PC-3 (cell line): ENCODE measurements at regions of chrX and their contacts with region 1.

Region 1: DNA sequence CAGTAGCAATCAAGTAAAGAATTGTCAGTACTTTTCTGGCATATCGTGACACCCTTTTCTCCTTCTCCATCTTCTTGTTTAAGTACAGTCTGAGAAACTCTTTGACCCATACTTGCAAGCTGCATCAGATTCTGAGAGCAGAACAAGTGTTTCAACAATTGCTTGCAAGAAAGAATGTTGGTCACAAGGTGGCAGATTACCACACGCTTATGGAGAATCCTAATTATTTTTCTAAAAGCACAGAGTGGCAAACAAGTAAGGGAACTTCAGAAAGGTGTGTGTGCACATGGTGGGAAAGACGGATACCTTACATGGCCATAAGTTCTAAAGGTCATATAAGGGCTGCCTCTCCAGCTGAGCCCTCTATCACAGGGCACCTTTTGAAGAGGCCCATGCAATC is 136.4 kb upstream of the FGF13 start:
- DNase-seq: peak; percentile 48
- ATAC-seq: peak; percentile 46; the same call in 1 of the 2 replicates
- H3K4me3 ChIP-seq: no peak overlapping the region
- H3K27ac ChIP-seq: no peak overlapping the region
- H3K4me1 ChIP-seq: no peaks in the 10 kb centered on the region; the same call in 1 of the 2 replicates
- H3K27me3 ChIP-seq: no peaks in the 10 kb centered on the region
- CTCF ChIP-seq: peak; percentile 65

Region 2: DNA sequence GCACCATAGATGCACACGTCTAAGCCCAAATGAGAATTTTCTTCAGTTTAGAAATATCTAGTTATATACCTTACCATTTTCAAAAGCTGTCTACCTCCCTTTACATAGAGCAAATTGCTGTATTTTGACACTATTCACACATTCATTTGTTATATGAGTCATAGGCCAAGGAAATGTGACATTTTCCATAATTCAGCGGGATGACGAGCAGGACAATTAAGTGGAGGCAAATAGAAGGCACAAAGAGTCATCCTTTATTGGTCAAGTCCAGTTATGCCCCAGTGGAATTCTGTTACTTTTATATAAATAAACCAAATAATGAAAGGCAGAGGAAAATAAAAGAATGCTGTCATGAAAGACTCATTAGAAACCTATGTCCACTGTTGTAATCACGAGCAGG is 164.3 kb before region 1 on chrX:
- CTCF ChIA-PET with region 1: no interaction called
- POLR2A ChIA-PET with region 1: no interaction called
- intact Hi-C with region 1: no loop called
- DNase-seq: no peak
- ATAC-seq: no peak
- H3K4me3 ChIP-seq: no peak overlapping the region
- H3K27ac ChIP-seq: no peak overlapping the region
- H3K4me1 ChIP-seq: no peaks in the 10 kb centered on the region
- H3K27me3 ChIP-seq: no peaks in the 10 kb centered on the region
- CTCF ChIP-seq: no peak

Region 3: DNA sequence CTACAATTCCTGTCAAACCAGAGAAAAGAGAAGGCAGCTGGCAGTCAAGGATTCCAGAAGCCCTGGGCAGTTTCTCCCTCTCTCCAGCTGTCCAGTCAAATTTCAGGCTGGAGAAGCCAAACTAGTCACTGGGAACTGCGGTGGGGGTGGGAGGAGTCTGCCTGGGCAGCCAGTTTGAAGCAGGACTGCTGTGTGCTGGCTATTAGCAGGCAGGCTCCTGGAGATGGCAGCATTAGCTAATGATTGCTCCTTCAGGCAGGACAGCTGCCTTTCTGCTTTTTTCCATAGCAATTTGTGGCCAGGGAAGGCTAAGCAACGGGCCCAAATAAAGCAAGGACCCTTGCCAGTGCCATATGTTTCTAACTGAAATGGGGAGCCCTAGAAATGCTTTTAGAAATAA is 91.7 kb before region 1 on chrX:
- CTCF ChIA-PET with region 1: no interaction called
- POLR2A ChIA-PET with region 1: no interaction called
- intact Hi-C with region 1: loop called (anchors 5 kb)
- DNase-seq: peak; percentile 73
- ATAC-seq: peak; percentile 93
- H3K4me3 ChIP-seq: no peak overlapping the region
- H3K27ac ChIP-seq: no peak overlapping the region
- H3K4me1 ChIP-seq: no peaks in the 10 kb centered on the region
- H3K27me3 ChIP-seq: no peaks in the 10 kb centered on the region
- CTCF ChIP-seq: peak; percentile 63

Region 4: GRCh38 chrX:138986235-138986634 is 138.3 kb after region 1 on chrX:
- CTCF ChIA-PET with region 1: no interaction called
- POLR2A ChIA-PET with region 1: no interaction called
- intact Hi-C with region 1: loop called (anchors 5 kb)
- DNase-seq: no peak
- ATAC-seq: no peak
- H3K4me3 ChIP-seq: no peak overlapping the region
- H3K27ac ChIP-seq: no peak overlapping the region
- H3K4me1 ChIP-seq: peaks cover 17% of the 10 kb centered on the region
- H3K27me3 ChIP-seq: no peaks in the 10 kb centered on the region
- CTCF ChIP-seq: no peak

Region 5: DNA sequence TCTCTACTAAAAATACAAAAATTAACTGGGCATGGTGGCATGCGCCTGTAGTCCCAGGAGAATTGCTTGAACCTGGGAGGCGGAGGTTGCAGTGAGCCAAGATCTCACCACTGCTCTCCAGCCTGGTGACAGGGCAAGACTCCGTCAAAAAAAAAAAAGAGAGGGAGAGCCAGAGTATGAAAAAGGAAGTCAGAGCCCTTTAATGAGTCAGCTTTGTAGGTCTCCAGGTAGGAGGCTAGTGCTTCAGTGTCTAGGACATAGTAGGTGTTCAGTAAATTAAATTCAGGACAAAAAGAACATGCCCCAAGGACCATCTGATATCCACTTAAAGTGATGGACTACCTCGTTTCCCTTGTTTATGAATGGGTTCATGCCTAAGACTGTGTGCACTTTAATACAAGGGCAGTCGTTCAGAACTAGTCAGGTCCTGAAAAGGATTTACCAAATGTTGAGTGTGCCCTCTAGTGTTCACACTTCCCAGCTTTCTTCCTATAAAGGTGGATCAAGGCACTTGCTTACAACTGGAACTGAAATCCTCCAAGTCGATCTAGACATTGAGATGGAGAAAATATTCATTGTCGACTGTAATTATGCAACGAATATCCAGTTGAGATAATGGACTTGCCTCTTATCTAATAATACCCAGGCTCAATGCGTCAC is 711.6 kb after region 1 on chrX:
- CTCF ChIA-PET with region 1: no interaction called
- POLR2A ChIA-PET with region 1: no interaction called
- intact Hi-C with region 1: loop called (anchors 1 kb)
- DNase-seq: peak; percentile 78
- ATAC-seq: peak; percentile 81
- H3K4me3 ChIP-seq: no peak overlapping the region
- H3K27ac ChIP-seq: no peak overlapping the region
- H3K4me1 ChIP-seq: no peaks in the 10 kb centered on the region
- H3K27me3 ChIP-seq: peaks cover 10% of the 10 kb centered on the region
- CTCF ChIP-seq: peak; percentile 74

Region 6: GRCh38 chrX:139759637-139760036 is 911.7 kb after region 1 on chrX:
- CTCF ChIA-PET with region 1: no interaction called
- POLR2A ChIA-PET with region 1: no interaction called
- intact Hi-C with region 1: loop called (anchors 5 kb)
- DNase-seq: peak; percentile 56
- ATAC-seq: peak; percentile 40
- H3K4me3 ChIP-seq: no peak overlapping the region
- H3K27ac ChIP-seq: no peak overlapping the region
- H3K4me1 ChIP-seq: no peaks in the 10 kb centered on the region
- H3K27me3 ChIP-seq: no peaks in the 10 kb centered on the region
- CTCF ChIP-seq: peak; percentile 76